Gastrocnemius medialis (tissue), 4 donors: ENCODE measurements at regions of chr1 and their contacts with region 1.

Region 1: DNA sequence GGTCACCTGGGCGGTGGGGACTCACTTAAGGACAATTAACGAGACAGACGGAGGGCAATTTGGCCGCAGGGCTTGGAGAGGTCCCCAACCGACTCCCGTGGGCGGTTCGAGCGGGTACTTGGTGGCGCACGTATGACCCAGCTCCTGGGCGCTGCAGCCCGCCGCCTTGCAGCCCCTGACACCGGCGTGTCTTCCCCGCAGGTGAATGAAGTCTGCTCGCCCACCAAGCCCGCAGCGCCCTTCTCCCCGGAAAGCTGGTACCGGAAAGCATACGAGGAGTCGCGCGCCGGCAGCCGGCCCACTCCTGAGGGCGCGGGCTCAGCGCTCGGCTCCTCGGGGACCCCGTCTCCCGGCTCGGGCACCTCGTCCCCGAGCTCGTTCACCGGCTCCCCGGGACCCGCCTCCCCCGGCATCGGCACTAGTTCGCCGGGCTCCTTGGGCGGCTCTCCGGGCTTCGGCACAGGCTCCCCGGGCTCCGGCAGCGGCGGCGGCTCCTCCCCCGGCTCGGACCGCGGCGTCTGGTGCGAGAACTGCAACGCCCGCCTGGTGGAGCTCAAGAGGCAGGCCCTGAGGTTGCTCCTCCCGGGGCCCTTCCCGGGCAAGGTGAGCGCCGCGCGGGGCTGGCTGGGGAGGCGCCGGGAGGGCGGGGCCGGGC is 1.4 kb downstream of the KIF26B start:
- DNase-seq: peak; percentile 24 to 44
- ATAC-seq: peak; percentile 46 to 61
- H3K4me3 ChIP-seq: peak overlapping the region; percentile 49 to 60 (median 54)
- H3K27ac ChIP-seq: no peak overlapping the region
- H3K4me1 ChIP-seq: peaks cover 4 to 29% of the 10 kb centered on the region in 2 donors
- H3K27me3 ChIP-seq: peaks cover 38 to 64% (median 41%) of the 10 kb centered on the region in 3 donors
- CTCF ChIP-seq: peak; percentile 14 to 64 (median 58)
- POLR2A ChIP-seq: no peak

Region 2: DNA sequence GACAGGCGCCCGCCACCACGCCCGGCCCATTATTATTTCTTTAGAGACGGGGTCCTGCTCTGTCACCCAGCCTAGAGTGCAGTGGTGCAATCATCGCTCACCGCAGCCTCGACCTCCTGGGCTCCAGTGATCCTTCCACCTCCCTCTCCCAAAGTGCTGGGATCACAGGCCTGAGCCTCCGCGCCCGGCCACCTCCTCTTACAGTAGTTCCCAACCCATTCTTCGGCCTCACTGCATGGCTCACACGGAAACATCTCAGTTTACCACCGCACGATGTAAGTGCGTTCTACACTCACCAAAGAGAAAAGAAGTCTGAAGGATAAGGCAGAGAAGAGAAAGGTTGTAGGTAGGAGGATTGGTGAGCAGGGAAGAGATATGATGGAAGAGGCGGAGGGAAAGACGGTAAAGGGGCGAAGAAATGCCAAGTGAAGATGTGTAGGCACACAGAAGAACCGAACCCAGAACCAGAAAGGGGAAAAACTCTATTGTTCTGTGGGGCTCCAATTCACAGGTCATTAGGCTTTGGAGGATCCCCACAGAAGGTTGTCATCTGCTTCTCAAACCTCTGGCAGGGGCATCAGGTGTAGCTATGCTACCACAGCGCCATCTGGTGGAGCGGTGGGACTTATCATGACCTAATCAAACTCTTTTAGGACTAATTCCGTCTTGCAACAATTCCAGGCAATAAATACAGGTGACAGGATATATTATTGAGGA is 846.7 kb after region 1 on chr1:
- in situ Hi-C with region 1: loop called (anchors 5 kb)
- intact Hi-C with region 1: loop called (anchors 1 kb)
- DNase-seq: peak; percentile 50 to 65
- ATAC-seq: peak; percentile 47 to 64
- H3K4me3 ChIP-seq: no peak overlapping the region
- H3K27ac ChIP-seq: no peak overlapping the region
- H3K4me1 ChIP-seq: peaks cover 3% of the 10 kb centered on the region in 2 donors
- H3K27me3 ChIP-seq: no peaks in the 10 kb centered on the region
- CTCF ChIP-seq: peak; percentile 56 to 87 (median 76)
- POLR2A ChIP-seq: no peak

Region 3: DNA sequence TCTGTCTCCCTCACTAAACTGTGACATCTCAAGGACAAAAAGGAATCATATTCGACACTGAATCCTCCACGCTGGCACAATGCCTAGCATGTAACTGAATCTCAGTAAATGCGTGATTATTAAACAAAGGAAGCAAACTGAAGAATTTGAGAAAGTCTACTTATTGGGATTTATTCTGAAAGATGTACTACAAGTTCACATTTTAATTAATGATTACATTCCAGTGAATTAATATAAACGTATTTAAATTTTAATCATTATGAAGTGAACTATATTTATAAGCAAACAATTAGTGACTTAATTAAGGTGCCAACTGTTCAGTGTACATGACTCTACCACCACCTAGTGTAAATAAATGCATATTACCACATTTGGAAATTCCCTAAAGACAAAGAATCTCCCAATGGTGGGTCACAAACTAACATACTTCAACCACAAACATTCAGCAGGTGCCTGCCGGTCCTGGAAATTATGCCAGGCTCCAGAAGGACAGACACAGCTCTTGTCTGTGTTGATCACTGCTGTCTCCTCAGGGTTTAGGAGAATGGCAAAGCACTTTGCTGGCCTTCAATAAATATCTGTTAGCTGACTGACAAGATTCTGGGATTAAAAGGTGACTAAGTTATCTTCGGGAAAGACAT is 1294.5 kb after region 1 on chr1:
- in situ Hi-C with region 1: no loop called
- intact Hi-C with region 1: loop called (anchors 10 kb)
- DNase-seq: no peak
- ATAC-seq: no peak
- H3K4me3 ChIP-seq: no peak overlapping the region
- H3K27ac ChIP-seq: no peak overlapping the region
- H3K4me1 ChIP-seq: peaks cover 31% of the 10 kb centered on the region in 2 donors
- H3K27me3 ChIP-seq: no peaks in the 10 kb centered on the region
- CTCF ChIP-seq: peak; percentile 35 to 73 (median 48)
- POLR2A ChIP-seq: no peak

Region 4: GRCh38 chr1:246482805-246483568 is 1326.8 kb after region 1 on chr1:
- in situ Hi-C with region 1: loop called (anchors 10 to 25 kb)
- intact Hi-C with region 1: no loop called
- DNase-seq: no peak
- ATAC-seq: no peak
- H3K4me3 ChIP-seq: no peak overlapping the region
- H3K27ac ChIP-seq: no peak overlapping the region
- H3K4me1 ChIP-seq: peaks cover 7 to 8% of the 10 kb centered on the region in 2 donors
- H3K27me3 ChIP-seq: no peaks in the 10 kb centered on the region
- CTCF ChIP-seq: no peak
- POLR2A ChIP-seq: no peak